ENCODE measurements at regions of chr1 and their contacts with region 1.

Region 1: GRCh38 chr1:115041654-115042053 is 12.0 kb downstream of the TSHB start:
- DNase-seq: no peak

Region 2: DNA sequence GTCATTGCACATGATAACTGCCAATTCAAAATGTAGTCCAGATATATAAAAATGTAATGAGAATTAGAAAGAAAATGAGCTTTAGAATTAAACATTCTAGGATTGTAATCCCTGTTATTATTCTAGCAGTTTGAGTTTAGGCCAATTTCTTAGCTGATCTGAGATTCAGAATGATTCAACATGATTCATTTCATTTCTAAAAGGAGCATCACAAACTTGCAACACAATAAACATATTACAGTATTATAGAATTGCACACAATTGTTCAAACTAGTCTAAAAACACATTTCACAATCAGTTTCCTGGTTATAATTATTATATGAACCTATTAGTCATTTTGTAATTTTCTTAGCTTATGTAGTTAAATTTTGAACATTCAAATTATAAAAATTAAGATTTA is 55.4 kb before region 1 on chr1:
- intact Hi-C with region 1: loop called in 1 of 2 experiments (anchors 10 kb)
- DNase-seq: no peak

Region 3: GRCh38 chr1:115089420-115090185 is 47.9 kb after region 1 on chr1 and contains the start of gene TSPAN2:
- intact Hi-C with region 1: loop called in 1 of 2 experiments (anchors 2 kb)
- DNase-seq: peak; percentile 93
- total RNA-seq, gene TSPAN2: 43.9 to 49.8 TPM